Esophagus squamous epithelium (tissue), 5 donors: ENCODE measurements at regions of chr9 and their contacts with region 1.

Region 1: DNA sequence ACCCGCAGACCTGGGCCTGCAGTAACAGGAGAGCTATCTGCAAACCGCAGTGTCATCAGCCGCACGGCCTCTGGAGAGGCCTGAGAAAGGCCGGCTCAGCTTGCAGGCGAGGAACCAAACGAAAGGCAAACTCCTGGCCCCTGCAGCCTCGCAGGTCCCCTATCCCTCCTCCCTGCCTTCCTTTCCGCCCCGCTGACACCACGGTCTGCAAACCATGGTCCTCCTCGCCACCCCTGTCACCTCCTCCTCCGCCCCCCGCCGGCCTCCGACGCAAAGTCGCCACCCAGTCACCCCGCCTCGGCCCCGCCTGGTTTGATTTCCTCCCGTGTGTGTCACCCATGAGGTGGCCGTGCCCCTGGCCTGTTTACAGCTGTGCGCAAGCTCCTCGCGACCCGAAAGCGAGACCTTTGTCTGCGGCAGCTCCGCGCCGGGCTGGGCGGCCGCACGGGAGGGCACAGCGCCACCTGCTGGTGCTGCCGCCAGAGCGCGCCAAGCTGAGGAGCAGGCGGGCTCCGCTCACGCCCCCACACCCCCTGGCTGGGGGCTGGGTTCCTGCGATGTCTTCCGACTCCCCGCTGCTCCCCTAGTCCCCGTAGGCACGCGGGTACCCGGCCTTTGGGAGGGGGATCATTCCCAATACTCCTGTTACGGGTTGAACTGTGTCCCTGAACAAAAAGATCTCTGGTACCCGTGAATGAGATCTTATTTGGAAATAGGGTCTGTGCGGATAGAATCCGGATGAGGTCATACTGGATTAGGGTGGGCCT is 19.4 kb downstream of the GBGT1 start:
- DNase-seq: peak; percentile 58
- H3K4me3 ChIP-seq: peak overlapping the region; percentile 18 to 65 (median 42)
- H3K27ac ChIP-seq: peak overlapping the region; percentile 53 to 83 (median 82)
- H3K4me1 ChIP-seq: peaks cover 61 to 94% (median 62%) of the 10 kb centered on the region in 3 donors
- H3K27me3 ChIP-seq: no peaks in the 10 kb centered on the region
- CTCF ChIP-seq: peak; percentile 98 to 100 (median 99)
- POLR2A ChIP-seq: peak in 1 of 4 donors; percentile 36

Region 2: GRCh38 chr9:133054966-133055365 is 89.4 kb before region 1 on chr9:
- intact Hi-C with region 1: loop called (anchors 5 kb)
- DNase-seq: no peak
- H3K4me3 ChIP-seq: no peak overlapping the region
- H3K27ac ChIP-seq: peak overlapping the region in 2 of 4 donors; percentile 88 to 91
- H3K4me1 ChIP-seq: peaks cover 32 to 50% (median 36%) of the 10 kb centered on the region in 3 donors
- H3K27me3 ChIP-seq: no peaks in the 10 kb centered on the region
- CTCF ChIP-seq: no peak
- POLR2A ChIP-seq: no peak

Region 3: DNA sequence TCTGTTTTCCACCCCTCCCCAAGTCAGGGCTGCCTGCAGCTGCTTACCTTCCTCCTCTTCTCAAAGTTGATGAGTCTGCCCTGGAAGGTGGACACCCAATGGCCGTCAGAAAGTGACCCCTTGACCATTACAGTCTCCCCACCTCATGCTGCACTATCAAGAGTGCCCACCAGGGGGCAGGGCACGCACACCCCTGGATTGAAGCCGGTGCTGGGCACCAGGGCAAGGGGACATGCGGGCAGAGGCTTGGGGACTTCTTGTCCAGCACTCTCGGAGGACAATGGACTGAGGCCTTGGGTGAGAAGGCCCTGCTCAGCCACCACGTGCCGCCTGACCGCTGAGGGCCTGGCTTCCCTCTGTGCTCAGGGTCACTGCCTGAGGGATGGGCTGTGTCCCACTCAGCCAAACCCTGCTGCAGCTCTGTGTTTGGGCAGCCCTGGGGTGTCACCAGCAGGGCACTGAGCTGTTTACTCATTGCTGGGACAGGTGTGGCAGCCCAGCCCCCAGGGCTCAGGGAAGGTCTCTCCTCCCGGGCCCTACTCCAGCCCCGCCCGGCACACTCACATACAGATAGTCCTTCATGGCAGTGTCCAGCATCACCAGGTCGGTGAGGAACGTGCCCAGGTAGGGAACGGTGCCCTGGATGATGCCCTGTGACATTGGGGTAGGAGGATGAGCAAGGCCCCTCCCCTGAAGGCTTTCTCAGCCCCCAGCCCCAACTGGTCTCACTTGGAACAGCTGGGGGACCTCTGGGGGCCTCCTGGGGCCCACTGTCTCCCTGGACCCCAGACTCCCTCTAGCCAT is 40.9 kb before region 1 on chr9:
- intact Hi-C with region 1: loop called (anchors 2 kb)
- DNase-seq: no peak
- H3K4me3 ChIP-seq: no peak overlapping the region
- H3K27ac ChIP-seq: peak overlapping the region; percentile 3 to 74 (median 54)
- H3K4me1 ChIP-seq: peaks cover 0 to 13% (median 5%) of the 10 kb centered on the region in 3 donors
- H3K27me3 ChIP-seq: no peaks in the 10 kb centered on the region
- CTCF ChIP-seq: peak; percentile 89 to 100 (median 96)
- POLR2A ChIP-seq: no peak